H1 (cell line): ENCODE measurements at regions of chr17 and their contacts with region 1.

Region 1: DNA sequence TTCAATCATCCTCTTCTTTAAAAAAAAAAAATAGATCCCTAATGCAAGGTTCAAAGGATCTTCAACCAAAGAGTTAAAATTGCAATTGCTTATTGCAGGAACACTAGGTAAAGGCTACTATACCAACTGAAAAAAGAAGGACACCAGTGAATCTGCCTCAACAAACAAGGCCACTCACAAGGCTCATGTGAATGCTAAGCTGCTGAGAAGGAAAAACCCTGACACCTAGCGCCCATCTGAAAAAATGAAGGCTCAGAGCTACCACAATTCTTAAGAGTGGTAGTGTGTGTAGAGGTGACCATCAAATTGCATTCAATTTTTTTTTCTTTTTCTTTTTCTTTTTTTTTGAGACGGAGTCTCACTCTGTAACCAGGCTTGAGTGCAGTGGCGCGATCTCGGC is 201.6 kb upstream of the C17orf78 start:
- DNase-seq: peak in 1 of 2 experiments; percentile 13
- H3K4me3 ChIP-seq: no peak overlapping the region
- H3K27ac ChIP-seq: no peak overlapping the region
- H3K4me1 ChIP-seq: peaks cover 4 to 26% (median 14%) of the 10 kb centered on the region in 4 experiments; a peak in 6 of 7 replicates
- H3K27me3 ChIP-seq: no peaks in the 10 kb centered on the region
- CTCF ChIP-seq: peak in 2 of 3 experiments; percentile 61 to 71; a peak in 3 of 4 replicates
- EP300 ChIP-seq: no peak
- POLR2A ChIP-seq: no peak
- RAD21 ChIP-seq: peak; percentile 78 to 82

Region 2: GRCh38 chr17:37164057-37164456 is 10.1 kb before region 1 on chr17:
- CTCF ChIA-PET with region 1: interaction called, 21 read pairs
- POLR2A ChIA-PET with region 1: interaction called, 6 read pairs
- DNase-seq: no peak
- H3K4me3 ChIP-seq: no peak overlapping the region
- H3K27ac ChIP-seq: no peak overlapping the region
- H3K4me1 ChIP-seq: peaks cover 0 to 5% (median 3%) of the 10 kb centered on the region in 4 experiments; a peak in 3 of 7 replicates
- H3K27me3 ChIP-seq: no peaks in the 10 kb centered on the region
- CTCF ChIP-seq: no peak
- EP300 ChIP-seq: no peak
- POLR2A ChIP-seq: no peak
- RAD21 ChIP-seq: no peak

Region 3: DNA sequence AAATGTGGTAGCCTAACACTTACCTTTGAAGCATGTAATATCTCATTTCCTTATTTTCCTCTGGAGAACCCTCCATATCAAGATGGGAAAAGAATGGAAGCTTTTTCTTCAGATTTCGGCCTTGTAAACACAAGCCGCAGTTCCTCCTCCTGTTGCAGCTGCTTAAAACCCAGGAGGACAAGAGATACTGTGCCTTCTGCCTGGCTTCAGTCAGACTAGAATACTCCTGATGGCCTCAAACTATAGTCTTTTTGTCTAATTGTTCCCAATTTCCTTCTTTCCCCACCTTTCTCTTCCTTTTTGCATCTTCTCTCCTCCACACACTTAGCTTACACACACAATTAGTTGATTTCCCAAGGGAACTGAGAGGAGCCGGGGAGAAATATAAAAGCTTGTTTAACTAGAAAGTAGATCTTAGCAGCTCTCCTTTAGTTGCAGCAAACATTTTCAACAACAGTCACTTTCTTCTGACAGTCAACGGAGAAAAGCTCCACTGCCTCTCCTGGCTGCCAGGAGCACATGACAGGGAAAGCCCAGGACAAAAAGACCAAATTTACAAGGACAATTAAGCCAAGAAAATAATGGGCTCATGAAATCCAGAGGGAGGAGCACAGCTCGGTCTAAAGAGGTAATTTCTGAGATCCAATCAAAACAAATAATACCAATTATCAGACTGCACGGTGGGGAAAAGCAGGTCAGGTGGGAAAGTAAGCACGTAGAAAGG is 125.2 kb after region 1 on chr17:
- CTCF ChIA-PET with region 1: no interaction called
- POLR2A ChIA-PET with region 1: no interaction called
- DNase-seq: peak in 1 of 2 experiments; percentile 35
- H3K4me3 ChIP-seq: no peak overlapping the region
- H3K27ac ChIP-seq: peak overlapping the region; percentile 49; the same call in 1 of the 2 replicates
- H3K4me1 ChIP-seq: peaks cover 9 to 25% (median 16%) of the 10 kb centered on the region in 4 experiments; a peak in 5 of 7 replicates
- H3K27me3 ChIP-seq: no peaks in the 10 kb centered on the region
- CTCF ChIP-seq: no peak
- EP300 ChIP-seq: no peak
- POLR2A ChIP-seq: no peak
- RAD21 ChIP-seq: no peak